CD4-positive, alpha-beta T cell (primary cell): ENCODE measurements at regions of chr12 and their contacts with region 1.

Region 1: GRCh38 chr12:45200491-45201043 is 15.3 kb upstream of the ANO6 start:
- DNase-seq: peak in 5 of 14 experiments; percentile 0 to 40 (median 37)
- ATAC-seq: peak; percentile 55
- H3K4me3 ChIP-seq: peak overlapping the region; percentile 31
- H3K4me3 Mint-ChIP-seq: peak overlapping the region; percentile 62
- H3K27ac ChIP-seq: no peak overlapping the region
- H3K27ac Mint-ChIP-seq: peak overlapping the region; percentile 65
- H3K4me1 ChIP-seq: peaks cover 15% of the 10 kb centered on the region
- H3K4me1 Mint-ChIP-seq: peaks cover 31% of the 10 kb centered on the region
- H3K27me3 ChIP-seq: no peaks in the 10 kb centered on the region
- H3K27me3 Mint-ChIP-seq: no peaks in the 10 kb centered on the region
- CTCF ChIP-seq: no peak

Region 2: DNA sequence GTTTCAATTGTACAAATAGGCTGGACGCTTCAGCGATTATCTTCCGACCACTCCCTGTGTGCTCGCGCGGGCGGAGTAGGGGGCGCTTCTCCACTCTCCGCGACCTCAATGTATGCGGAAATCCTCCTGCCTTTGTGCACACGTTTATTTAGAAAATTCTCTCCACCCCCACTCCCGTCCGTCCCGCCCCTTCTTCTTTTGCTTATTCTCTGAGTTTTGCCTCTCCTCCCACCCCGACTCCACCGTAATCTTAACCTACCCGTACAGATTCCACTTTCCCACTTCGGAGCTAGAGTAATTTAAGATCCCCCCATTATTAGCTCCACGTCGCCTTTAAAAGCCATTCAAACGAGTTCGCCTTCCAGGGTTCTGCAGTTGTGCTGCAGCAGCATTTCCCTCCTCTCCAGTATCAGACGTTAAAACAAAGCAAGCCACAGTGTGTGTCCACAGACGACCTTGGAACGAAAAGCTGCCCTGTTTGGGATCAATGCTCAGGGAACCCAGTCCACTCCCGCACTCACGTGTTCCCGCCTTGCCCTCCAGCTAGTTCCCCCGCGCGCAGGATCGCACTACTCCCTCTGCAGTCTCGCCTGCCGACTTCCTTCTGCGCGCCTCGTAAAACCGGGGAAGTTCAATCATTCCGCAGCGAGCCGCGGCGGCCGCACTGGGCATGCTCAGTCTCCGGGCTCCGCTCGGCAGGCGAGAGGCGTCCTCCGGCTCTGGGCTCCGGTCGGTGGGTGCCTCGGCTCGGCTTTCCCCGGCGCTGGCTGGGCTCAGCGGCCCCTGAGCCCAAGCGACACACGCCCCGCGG is 15.1 kb after region 1 on chr12 and contains the start of gene ANO6:
- CTCF ChIA-PET with region 1: no interaction called
- POLR2A ChIA-PET with region 1: interaction called, 30 read pairs
- intact Hi-C with region 1: no loop called
- DNase-seq: peak; percentile 53 to 90 (median 69)
- ATAC-seq: peak; percentile 78
- H3K4me3 ChIP-seq: peak within 1 kb of the TSS; percentile 92
- H3K4me3 Mint-ChIP-seq: peak within 1 kb of the TSS; percentile 93
- H3K27ac ChIP-seq: peak within 1 kb of the TSS; percentile 15 to 73
- H3K27ac Mint-ChIP-seq: peak within 1 kb of the TSS; percentile 86
- H3K4me1 ChIP-seq: peaks cover 20% of the 10 kb centered on the region
- H3K4me1 Mint-ChIP-seq: peaks cover 71% of the 10 kb centered on the region
- H3K27me3 ChIP-seq: no peaks in the 10 kb centered on the region
- H3K27me3 Mint-ChIP-seq: no peaks in the 10 kb centered on the region
- CTCF ChIP-seq: peak; percentile 53
- total RNA-seq, gene ANO6: 11.6 to 11.7 TPM